ENCODE measurements at regions of chr4 and their contacts with region 1.

Region 1: DNA sequence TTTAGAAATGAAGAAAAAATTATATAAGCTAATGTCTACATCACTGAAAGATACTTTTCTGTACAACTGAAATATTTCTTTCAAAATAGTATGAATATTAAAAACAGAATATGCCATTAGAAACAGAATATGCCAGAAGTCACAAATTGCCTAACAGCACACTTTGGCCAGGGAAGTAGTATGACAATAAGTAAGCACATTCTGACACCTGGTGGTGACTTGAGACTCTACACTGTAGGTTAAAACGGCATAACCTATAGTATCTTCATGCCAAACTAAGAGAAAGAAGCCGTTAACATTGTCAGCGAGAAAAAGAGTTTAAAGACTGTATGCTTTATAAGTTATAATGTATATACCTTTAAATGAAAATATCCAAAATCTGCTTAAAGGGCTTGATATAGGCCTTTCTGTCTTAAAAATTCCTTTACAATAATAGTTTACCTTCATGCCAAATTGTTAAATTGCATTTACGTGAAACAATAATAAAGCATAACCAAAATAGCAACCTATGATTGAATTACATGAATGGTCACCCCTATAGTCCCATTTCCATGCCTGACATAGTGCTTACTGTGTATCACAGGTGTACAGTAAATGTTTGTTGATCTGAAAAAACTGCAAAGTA is 32.8 kb downstream of the FAM13A start:
- DNase-seq: peak; percentile 52 to 82 (median 60)
- ATAC-seq: peak; percentile 96
- H3K4me3 ChIP-seq: no peak overlapping the region
- H3K27ac ChIP-seq: no peak overlapping the region; the same call in 2 of the 3 replicates
- H3K4me1 ChIP-seq: peaks cover 4 to 16% of the 10 kb centered on the region in 2 experiments; a peak in 3 of 5 replicates
- H3K27me3 ChIP-seq: no peaks in the 10 kb centered on the region
- CTCF ChIP-seq: peak; percentile 71 to 88 (median 76); a peak in 5 of 6 replicates
- EP300 ChIP-seq: no peak; the same call in 1 of the 2 replicates
- POLR2A ChIP-seq: no peak
- RAD21 ChIP-seq: peak; percentile 95 to 96

Region 2: GRCh38 chr4:88341227-88342192 is 682.7 kb before region 1 on chr4:
- CTCF ChIA-PET with region 1: no interaction called
- POLR2A ChIA-PET with region 1: no interaction called
- in situ Hi-C with region 1: no loop called
- intact Hi-C with region 1: no loop called
- DNase-seq: no peak
- ATAC-seq: no peak
- H3K4me3 ChIP-seq: no peak overlapping the region
- H3K27ac ChIP-seq: no peak overlapping the region
- H3K4me1 ChIP-seq: no peaks in the 10 kb centered on the region
- H3K27me3 ChIP-seq: no peaks in the 10 kb centered on the region
- CTCF ChIP-seq: no peak
- EP300 ChIP-seq: no peak
- POLR2A ChIP-seq: no peak
- RAD21 ChIP-seq: no peak

Region 3: DNA sequence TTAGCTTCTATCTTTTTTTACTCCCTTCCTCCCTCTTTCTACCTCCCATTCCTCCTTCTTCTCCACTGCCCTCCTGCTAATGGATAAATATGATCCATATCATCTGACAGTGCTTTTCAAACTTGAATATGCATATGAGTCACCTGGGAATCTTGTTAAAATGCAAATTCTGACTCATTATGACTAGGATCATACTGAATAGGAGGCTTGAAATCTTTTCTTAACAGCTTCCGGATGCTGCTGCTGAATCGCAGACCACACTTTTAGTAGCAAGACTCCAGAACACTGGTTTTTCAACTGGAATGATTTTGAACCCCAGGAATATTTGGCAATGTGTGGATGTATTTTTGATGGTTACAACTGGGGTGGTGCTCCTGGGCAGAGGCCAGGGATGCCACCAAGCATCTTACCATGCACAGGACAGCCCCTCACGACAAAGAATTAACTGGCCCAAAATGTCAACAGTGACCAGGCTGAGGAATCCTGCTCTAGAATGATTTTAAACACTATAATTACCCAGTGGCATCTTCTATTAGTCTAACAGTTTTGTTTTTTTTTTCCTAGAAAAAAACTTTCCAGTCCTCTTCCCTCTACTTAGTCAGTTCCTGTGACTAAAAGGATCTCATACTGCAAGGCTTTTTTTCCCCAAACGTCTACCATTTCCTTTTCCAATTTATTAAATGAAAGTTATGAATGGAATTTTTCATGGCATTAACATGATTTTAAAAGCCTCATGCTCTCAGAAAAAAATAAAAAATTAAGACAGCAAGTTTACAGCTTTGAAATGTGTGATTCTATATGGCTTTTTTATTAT is 490.0 kb before region 1 on chr4:
- CTCF ChIA-PET with region 1: interaction called, 4 read pairs
- POLR2A ChIA-PET with region 1: no interaction called
- in situ Hi-C with region 1: loop called (anchors 5 kb)
- intact Hi-C with region 1: loop called (anchors 1 kb)
- DNase-seq: no peak
- ATAC-seq: no peak
- H3K4me3 ChIP-seq: no peak overlapping the region
- H3K27ac ChIP-seq: no peak overlapping the region
- H3K4me1 ChIP-seq: peaks cover 0 to 3% of the 10 kb centered on the region in 2 experiments; a peak in 1 of 5 replicates
- H3K27me3 ChIP-seq: no peaks in the 10 kb centered on the region
- CTCF ChIP-seq: no peak
- EP300 ChIP-seq: no peak
- POLR2A ChIP-seq: no peak
- RAD21 ChIP-seq: no peak

Region 4: DNA sequence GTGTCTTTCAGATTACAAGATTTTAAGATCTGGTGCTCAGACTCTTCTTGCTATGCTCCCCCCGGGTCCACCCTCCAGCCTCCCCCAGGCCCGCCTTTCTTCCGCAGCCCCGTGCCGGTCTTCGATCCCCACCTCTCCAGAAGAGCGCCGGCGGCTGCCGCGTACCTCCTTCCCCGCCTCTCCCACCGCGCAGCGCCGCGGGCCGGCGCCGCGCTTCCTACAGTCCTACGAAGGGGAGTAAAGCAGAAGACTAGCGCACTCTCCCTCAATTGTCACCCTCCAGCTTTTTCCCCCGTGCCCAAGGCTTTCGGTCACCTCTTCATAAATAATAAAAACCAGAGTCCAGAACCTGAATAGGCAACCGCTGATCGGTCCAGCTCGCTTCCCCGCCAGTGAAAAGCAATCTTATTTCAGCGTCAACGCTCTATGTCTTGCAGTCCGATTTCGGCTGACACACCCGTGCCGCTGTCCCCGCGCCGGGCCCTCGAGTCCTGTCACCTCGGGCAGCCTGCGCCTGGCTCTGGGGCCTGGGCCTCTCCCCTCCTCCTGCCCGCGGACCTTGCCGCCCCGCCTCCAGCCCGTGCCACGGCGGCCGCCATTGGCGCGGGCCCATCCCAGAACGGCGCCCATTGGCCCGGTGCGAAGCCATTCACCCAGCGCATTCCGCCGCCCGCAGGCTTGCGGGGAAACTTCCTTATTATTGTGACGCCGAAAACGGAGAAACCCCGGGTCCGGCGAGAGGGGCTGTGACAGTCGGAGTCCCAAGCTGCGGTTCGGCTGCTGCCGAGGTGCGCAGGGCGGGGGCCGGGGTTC is 432.2 kb before region 1 on chr4 and contains the start of gene HERC3:
- CTCF ChIA-PET with region 1: no interaction called
- POLR2A ChIA-PET with region 1: no interaction called
- in situ Hi-C with region 1: no loop called
- intact Hi-C with region 1: loop called (anchors 5 kb)
- DNase-seq: peak; percentile 91 to 96 (median 94)
- ATAC-seq: peak; percentile 99
- H3K4me3 ChIP-seq: peak within 1 kb of the TSS; percentile 94
- H3K27ac ChIP-seq: peak within 1 kb of the TSS; percentile 50; the same call in 2 of the 3 replicates
- H3K4me1 ChIP-seq: peaks cover 0 to 17% of the 10 kb centered on the region in 2 experiments; a peak in 4 of 5 replicates
- H3K27me3 ChIP-seq: no peaks in the 10 kb centered on the region; a peak in 1 of 5 replicates
- CTCF ChIP-seq: 0 out of 6 replicates have a peak, but pooled peaks of 1 of the 3 experiments have one; percentile 5
- EP300 ChIP-seq: no peak
- POLR2A ChIP-seq: no peak
- RAD21 ChIP-seq: no peak
- polyA plus RNA-seq, gene HERC3: 1.8 to 2.0 TPM

Region 5: GRCh38 chr4:88672987-88673386 is 351.2 kb before region 1 on chr4:
- CTCF ChIA-PET with region 1: interaction called, 5 read pairs
- POLR2A ChIA-PET with region 1: no interaction called
- in situ Hi-C with region 1: no loop called
- intact Hi-C with region 1: loop called (anchors 5 kb)
- DNase-seq: peak; percentile 15 to 66 (median 31)
- ATAC-seq: peak; percentile 98
- H3K4me3 ChIP-seq: no peak overlapping the region
- H3K27ac ChIP-seq: no peak overlapping the region
- H3K4me1 ChIP-seq: peaks cover 0 to 2% of the 10 kb centered on the region in 2 experiments; a peak in 1 of 5 replicates
- H3K27me3 ChIP-seq: no peaks in the 10 kb centered on the region
- CTCF ChIP-seq: peak; percentile 44 to 74 (median 73)
- EP300 ChIP-seq: no peak
- POLR2A ChIP-seq: no peak
- RAD21 ChIP-seq: peak; percentile 28 to 53; a peak in 3 of 4 replicates

Region 6: DNA sequence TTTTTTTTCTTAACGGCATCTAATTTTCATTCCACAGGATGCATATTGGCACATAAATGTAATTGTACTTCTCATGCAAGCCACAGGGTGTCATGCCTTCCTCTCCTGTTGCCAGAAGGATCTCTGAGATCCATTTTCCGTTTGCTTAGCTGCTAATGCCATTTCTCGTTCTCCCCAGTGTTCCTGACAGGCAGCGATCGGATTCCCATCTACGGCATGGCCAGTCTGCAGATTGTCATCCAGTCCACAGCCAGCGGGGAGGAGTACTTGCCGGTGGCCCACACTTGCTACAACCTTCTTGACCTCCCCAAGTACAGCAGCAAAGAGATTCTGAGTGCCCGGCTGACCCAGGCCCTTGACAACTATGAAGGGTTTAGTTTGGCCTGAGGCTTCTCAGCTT is 317.6 kb before region 1 on chr4:
- CTCF ChIA-PET with region 1: interaction called, 8 read pairs
- POLR2A ChIA-PET with region 1: no interaction called
- in situ Hi-C with region 1: no loop called
- intact Hi-C with region 1: loop called (anchors 1 kb)
- DNase-seq: peak in 1 of 4 experiments; percentile 30
- ATAC-seq: peak; percentile 75; the same call in 2 of the 3 replicates
- H3K4me3 ChIP-seq: no peak overlapping the region
- H3K27ac ChIP-seq: no peak overlapping the region
- H3K4me1 ChIP-seq: no peaks in the 10 kb centered on the region; a peak in 1 of 5 replicates
- H3K27me3 ChIP-seq: no peaks in the 10 kb centered on the region
- CTCF ChIP-seq: peak; percentile 43 to 53 (median 48); a peak in 4 of 6 replicates
- EP300 ChIP-seq: no peak
- POLR2A ChIP-seq: no peak
- RAD21 ChIP-seq: peak in 1 of 2 experiments; percentile 45; a peak in 2 of 4 replicates

Region 7: DNA sequence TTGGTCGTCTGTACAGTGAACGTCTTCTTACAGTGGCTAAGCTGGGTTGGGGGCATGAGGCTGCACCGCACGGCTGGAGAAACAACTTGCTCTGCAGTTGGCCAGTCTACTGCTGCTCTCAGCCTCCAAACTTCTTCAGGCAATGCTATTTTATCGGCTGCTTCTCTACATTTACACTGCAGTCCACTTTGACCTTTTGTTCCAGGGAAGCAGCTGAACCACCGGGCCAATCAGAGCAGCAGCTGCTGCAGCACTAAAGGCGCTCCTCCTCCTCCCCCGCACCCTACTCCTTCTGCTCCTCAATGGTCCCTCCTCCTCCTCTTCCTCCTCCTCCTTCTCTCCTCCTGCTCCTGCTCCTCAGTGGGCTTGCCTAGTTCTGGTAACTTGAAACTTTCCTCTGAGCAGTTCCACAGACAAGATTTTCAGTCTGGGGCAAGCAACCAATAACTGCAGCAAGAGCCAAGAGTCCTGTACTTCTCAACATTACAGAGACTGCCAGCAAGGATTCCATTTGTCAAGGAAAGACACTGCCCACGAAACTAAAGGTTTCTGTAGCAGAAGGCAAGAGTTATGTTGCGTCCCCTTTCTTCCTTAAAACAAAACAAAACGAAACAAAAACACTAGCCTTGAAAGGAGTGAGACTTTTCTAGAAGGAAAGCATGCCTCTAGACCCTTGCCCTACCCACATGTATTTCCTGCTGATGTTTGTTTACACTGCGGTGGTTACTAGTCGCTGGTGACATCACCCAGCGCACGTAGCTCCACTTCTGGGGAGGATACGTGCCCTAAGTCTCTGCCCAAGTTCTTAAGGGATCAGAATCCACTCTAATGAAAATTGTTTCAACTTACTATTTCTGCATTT is 200.9 kb before region 1 on chr4:
- CTCF ChIA-PET with region 1: interaction called, 21 read pairs
- POLR2A ChIA-PET with region 1: interaction called, 7 read pairs
- in situ Hi-C with region 1: no loop called
- intact Hi-C with region 1: loop called (anchors 1 kb)
- DNase-seq: peak; percentile 74 to 92 (median 83)
- ATAC-seq: peak; percentile 95
- H3K4me3 ChIP-seq: peak overlapping the region; percentile 39
- H3K27ac ChIP-seq: peak overlapping the region; percentile 96
- H3K4me1 ChIP-seq: peaks cover 0 to 4% of the 10 kb centered on the region in 2 experiments; a peak in 2 of 5 replicates
- H3K27me3 ChIP-seq: no peaks in the 10 kb centered on the region
- CTCF ChIP-seq: no peak
- EP300 ChIP-seq: peak; percentile 37; the same call in 1 of the 2 replicates
- POLR2A ChIP-seq: peak; percentile 59
- RAD21 ChIP-seq: no peak

Region 8: DNA sequence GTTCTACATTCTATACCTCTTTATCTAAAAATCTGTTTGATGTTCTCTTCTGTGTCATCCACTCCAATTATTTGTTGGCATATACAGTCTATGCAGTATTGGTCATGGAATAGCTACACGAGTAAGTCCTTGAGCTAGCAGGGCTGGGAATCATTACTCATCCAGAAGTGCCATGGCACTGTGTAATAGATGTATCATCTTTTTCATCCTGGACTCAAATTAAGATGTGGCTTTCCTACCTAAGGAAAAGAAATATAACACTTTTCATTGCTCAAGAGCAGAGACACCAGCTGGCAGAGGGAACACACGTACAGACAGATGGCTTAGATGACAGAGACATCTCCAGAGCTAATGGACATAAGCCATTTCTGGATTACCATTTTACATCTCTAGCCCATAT is 127.0 kb before region 1 on chr4:
- CTCF ChIA-PET with region 1: no interaction called
- POLR2A ChIA-PET with region 1: no interaction called
- in situ Hi-C with region 1: no loop called
- intact Hi-C with region 1: loop called (anchors 10 kb)
- DNase-seq: no peak
- ATAC-seq: no peak
- H3K4me3 ChIP-seq: no peak overlapping the region
- H3K27ac ChIP-seq: no peak overlapping the region
- H3K4me1 ChIP-seq: no peaks in the 10 kb centered on the region
- H3K27me3 ChIP-seq: no peaks in the 10 kb centered on the region
- CTCF ChIP-seq: no peak
- EP300 ChIP-seq: no peak
- POLR2A ChIP-seq: no peak
- RAD21 ChIP-seq: no peak

Measured in K562 (cell line).